Heart right ventricle (tissue), 16 donors: ENCODE measurements at regions of chr3 and their contacts with region 1.

Region 1: GRCh38 chr3:49539659-49540560 is 14.4 kb upstream of the BSN start:
- DNase-seq: peak; percentile 92 to 96
- ATAC-seq: peak; percentile 97 to 99 (median 98)
- H3K4me3 ChIP-seq: peak overlapping the region in 9 of 10 donors; percentile 44 to 78 (median 58)
- H3K27ac ChIP-seq: peak overlapping the region in 9 of 10 donors; percentile 72 to 89 (median 82)
- H3K4me1 ChIP-seq: peaks cover 0 to 15% (median 6%) of the 10 kb centered on the region in 9 donors
- H3K27me3 ChIP-seq: peaks cover 0 to 3% (median 0%) of the 10 kb centered on the region in 7 donors
- CTCF ChIP-seq: peak; percentile 85 to 94 (median 91)

Region 2: GRCh38 chr3:49153349-49153912 is 386.5 kb before region 1 on chr3:
- intact Hi-C with region 1: no loop called
- DNase-seq: no peak
- ATAC-seq: peak in 1 of 8 donors; percentile 25
- H3K4me3 ChIP-seq: no peak overlapping the region
- H3K27ac ChIP-seq: no peak overlapping the region
- H3K4me1 ChIP-seq: peaks cover 0 to 3% (median 0%) of the 10 kb centered on the region in 9 donors
- H3K27me3 ChIP-seq: no peaks in the 10 kb centered on the region
- CTCF ChIP-seq: no peak

Region 3: GRCh38 chr3:49351521-49352011 is 188.3 kb before region 1 on chr3:
- intact Hi-C with region 1: no loop called
- DNase-seq: no peak
- ATAC-seq: peak in 3 of 8 donors; percentile 14 to 21 (median 18)
- H3K4me3 ChIP-seq: no peak overlapping the region
- H3K27ac ChIP-seq: peak overlapping the region in 5 of 10 donors; percentile 19 to 89 (median 37)
- H3K4me1 ChIP-seq: peaks cover 0 to 86% (median 12%) of the 10 kb centered on the region in 9 donors
- H3K27me3 ChIP-seq: no peaks in the 10 kb centered on the region
- CTCF ChIP-seq: no peak

Region 4: DNA sequence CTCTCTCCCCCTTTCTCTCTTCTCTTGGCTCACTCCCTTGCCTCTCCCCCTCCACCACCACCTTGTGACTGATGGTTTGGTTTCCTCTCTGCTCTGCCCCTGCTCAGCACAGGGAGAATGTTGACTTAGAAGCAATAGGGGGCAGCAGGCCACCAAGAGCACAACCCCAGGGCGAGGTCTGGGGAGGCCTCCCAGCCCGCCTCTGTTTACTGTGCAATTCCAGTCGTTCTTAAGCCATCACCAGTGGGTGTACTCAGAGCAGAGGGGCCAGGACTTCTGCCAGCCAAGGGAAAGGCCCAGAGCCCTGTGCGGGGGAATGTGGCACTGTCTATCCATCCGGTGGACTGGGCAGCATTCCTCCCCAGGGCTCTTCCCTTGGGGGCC is 128.5 kb after region 1 on chr3:
- intact Hi-C with region 1: loop called (anchors 1 to 5 kb)
- DNase-seq: no peak
- ATAC-seq: no peak
- H3K4me3 ChIP-seq: no peak overlapping the region
- H3K27ac ChIP-seq: no peak overlapping the region
- H3K4me1 ChIP-seq: peaks cover 2 to 14% (median 4%) of the 10 kb centered on the region in 9 donors
- H3K27me3 ChIP-seq: no peaks in the 10 kb centered on the region
- CTCF ChIP-seq: no peak